ENCODE measurements at regions of chr10 and their contacts with region 1.

Region 1: GRCh38 chr10:25747084-25747483 is 186.9 kb upstream of the MYO3A start:
- DNase-seq: no peak
- H3K4me3 ChIP-seq: no peak overlapping the region
- H3K27ac ChIP-seq: no peak overlapping the region
- H3K4me1 ChIP-seq: peaks cover 0 to 3% (median 0%) of the 10 kb centered on the region in 4 experiments; a peak in 2 of 7 replicates
- H3K27me3 ChIP-seq: no peaks in the 10 kb centered on the region
- CTCF ChIP-seq: no peak
- EP300 ChIP-seq: no peak
- POLR2A ChIP-seq: no peak
- RAD21 ChIP-seq: no peak

Region 2: GRCh38 chr10:25604591-25604990 is 142.5 kb before region 1 on chr10:
- CTCF ChIA-PET with region 1: no interaction called
- POLR2A ChIA-PET with region 1: no interaction called
- DNase-seq: no peak
- H3K4me3 ChIP-seq: no peak overlapping the region
- H3K27ac ChIP-seq: no peak overlapping the region
- H3K4me1 ChIP-seq: no peaks in the 10 kb centered on the region
- H3K27me3 ChIP-seq: no peaks in the 10 kb centered on the region
- CTCF ChIP-seq: no peak
- EP300 ChIP-seq: no peak
- POLR2A ChIP-seq: no peak
- RAD21 ChIP-seq: no peak

Region 3: DNA sequence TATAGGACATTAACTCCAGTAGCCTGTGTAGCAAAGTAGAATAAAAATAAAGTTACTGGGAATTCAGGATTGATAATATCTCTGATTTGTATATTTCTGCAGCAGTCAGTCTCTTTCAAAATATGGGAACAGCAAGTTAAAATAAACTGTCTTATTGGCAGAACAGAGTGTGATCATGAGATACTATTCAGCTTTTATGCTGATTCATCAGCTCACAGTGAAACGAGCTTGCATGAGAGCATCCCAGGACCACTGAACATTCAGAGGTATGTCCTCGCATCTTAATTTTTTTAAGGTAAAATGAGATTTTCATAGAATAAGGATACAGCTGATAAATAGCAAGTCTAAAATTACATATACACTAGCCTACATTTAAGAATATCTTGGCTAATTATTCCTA is 95.5 kb before region 1 on chr10:
- CTCF ChIA-PET with region 1: no interaction called
- POLR2A ChIA-PET with region 1: no interaction called
- DNase-seq: no peak
- H3K4me3 ChIP-seq: no peak overlapping the region
- H3K27ac ChIP-seq: no peak overlapping the region
- H3K4me1 ChIP-seq: no peaks in the 10 kb centered on the region
- H3K27me3 ChIP-seq: no peaks in the 10 kb centered on the region
- CTCF ChIP-seq: no peak
- EP300 ChIP-seq: no peak
- POLR2A ChIP-seq: no peak
- RAD21 ChIP-seq: no peak

Region 4: DNA sequence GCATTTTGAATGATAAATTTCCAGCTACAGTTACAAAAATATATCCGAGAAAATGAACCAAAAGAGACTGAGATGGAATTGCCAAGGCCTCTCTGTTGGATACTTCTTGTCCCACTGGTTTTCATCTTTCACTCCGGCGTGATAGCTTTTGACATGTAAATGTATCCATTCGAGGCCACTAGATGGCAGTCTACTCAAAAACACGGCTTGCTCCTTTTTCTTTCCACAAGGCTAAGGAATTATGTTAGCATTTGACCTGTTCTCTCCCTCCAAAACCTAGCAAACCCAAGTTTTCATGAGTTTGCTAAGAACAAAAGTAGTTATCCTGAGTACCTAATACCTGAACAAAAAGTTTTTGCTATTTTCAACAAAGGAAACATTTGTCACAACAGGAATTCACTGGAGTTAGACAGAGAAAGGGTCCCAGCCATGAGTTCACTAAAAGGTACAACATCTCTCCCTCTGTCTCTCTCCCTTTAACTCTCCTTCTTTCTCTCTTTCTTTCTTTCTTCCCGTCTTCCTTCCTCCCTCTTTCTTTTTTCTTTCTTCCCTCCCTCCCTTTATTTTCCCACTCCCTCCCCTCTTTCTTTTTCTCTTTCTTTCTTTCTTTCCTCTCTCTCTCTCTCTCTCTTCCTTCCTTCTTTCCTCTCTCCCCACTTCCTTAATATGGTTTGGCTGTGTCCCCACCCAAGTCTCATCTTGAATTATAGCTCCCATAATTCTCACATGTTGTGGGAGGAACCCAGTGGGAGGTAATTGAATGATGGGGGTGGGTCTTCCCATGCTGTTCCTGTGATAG is 21.0 kb before region 1 on chr10:
- CTCF ChIA-PET with region 1: interaction called, 10 read pairs
- POLR2A ChIA-PET with region 1: no interaction called
- DNase-seq: no peak
- H3K4me3 ChIP-seq: no peak overlapping the region
- H3K27ac ChIP-seq: no peak overlapping the region
- H3K4me1 ChIP-seq: 0 out of 7 replicates have a peak, but pooled peaks cover 0 to 2% (median 0%) of the 10 kb centered on the region in 4 experiments
- H3K27me3 ChIP-seq: no peaks in the 10 kb centered on the region
- CTCF ChIP-seq: peak in 2 of 3 experiments; percentile 63 to 74; a peak in 3 of 4 replicates
- EP300 ChIP-seq: no peak
- POLR2A ChIP-seq: no peak
- RAD21 ChIP-seq: peak; percentile 81 to 83